ENCODE measurements at regions of chr13 and their contacts with region 1.

Region 1: DNA sequence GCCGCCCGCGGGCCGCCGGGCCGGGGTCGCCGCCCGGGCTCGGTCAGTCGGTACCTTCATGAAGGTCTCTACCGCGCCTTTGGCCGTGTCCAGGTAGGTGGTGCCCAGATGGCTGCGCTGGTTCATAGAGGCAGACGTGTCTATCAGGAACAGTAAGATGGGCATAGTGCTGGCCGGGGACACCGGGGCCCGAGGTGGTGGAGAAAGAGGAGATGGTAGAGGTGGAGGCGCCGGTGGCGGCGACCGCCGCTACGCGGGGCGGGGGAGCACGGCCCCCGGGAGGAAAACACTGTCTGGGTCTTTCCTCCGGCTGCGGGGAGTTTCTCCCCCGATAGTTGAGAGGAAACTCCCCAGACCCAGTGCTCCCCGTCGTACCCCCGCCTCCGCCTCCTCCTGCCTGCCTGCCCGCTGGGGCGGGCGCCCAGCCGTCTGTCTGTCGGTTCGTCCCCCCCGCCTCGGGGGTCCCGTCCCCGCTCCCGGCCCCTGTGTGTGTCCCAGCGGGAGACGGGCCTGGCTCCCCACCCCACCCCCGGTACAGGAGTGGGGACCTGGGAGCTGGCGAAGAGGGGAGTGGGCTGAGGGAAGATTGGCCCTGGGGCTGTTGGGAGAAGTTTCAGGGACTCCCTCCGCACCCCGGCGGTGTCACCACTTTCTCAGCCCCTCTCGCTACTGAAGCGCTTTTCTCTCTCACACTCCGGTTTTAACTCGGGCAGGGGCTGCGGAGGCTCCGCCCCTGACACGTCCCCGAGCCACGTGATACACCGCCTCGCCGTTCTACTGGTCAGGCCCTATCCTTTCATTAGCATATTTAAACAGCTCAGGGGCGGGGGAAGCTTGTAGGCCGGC is at the start of gene INTS6:
- DNase-seq: peak; percentile 99 to 100 (median 99)
- H3K4me3 ChIP-seq: peak within 1 kb of the TSS; percentile 83 to 96 (median 90)
- H3K27ac ChIP-seq: peak within 1 kb of the TSS; percentile 96 to 98
- H3K4me1 ChIP-seq: peaks cover 13 to 42% (median 29%) of the 10 kb centered on the region in 4 experiments
- H3K27me3 ChIP-seq: no peaks in the 10 kb centered on the region

Region 2: GRCh38 chr13:51425410-51426042 is 27.1 kb before region 1 on chr13:
- CTCF ChIA-PET with region 1: no interaction called
- POLR2A ChIA-PET with region 1: no interaction called
- DNase-seq: no peak
- H3K4me3 ChIP-seq: no peak overlapping the region
- H3K27ac ChIP-seq: no peak overlapping the region
- H3K4me1 ChIP-seq: peaks cover 0 to 4% (median 0%) of the 10 kb centered on the region in 4 experiments
- H3K27me3 ChIP-seq: no peaks in the 10 kb centered on the region

Region 3: DNA sequence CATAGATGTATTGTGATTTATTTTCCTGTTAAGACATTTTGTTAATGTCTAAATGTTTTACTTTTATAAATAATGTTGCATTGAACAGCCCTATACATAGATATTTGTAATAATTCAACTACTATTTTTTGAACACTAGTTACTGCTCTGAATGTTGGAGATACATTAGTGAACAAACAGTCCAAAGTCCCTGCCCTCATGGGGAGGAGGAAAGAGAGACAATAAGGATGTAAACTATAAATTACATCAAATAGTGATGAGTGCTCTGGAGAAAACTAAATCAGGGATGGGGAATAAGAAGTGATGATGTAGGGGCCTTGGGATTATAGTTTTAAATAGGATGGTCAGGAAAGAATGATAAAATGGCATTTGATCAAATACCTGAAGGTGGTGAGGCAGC is 12.5 kb after region 1 on chr13:
- CTCF ChIA-PET with region 1: interaction called, 10 read pairs
- POLR2A ChIA-PET with region 1: no interaction called
- DNase-seq: no peak
- H3K4me3 ChIP-seq: no peak overlapping the region
- H3K27ac ChIP-seq: no peak overlapping the region
- H3K4me1 ChIP-seq: no peaks in the 10 kb centered on the region
- H3K27me3 ChIP-seq: no peaks in the 10 kb centered on the region

Region 4: DNA sequence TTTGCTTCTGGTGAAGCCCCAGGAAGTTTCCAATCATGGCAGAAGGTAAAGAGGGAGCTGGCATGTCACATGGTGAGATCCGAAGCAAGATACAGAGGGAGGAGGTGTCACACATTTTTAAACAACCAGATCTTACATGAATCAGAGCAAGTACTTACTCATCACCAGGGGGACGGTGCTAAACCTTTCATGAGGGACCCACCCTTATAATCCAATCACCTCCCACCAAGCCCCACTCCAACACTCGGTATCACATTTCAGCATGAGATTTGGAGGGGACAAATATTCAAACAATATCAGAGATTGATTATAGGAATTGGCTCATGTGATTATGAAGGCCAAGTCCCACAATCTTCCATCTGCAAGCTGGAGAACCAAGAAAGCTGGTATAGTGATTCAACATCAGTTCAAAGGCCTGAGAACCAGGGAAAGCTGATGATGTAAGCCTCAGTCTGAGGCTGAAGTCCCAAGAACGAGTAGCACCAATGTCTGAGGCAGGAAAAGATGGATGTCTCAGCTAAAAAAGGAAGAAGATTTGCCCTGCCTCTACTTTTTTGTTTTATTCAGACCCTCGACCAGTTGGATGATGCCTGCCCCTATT is 73.1 kb after region 1 on chr13:
- CTCF ChIA-PET with region 1: interaction called, 11 read pairs
- POLR2A ChIA-PET with region 1: interaction called, 6 read pairs
- DNase-seq: no peak
- H3K4me3 ChIP-seq: no peak overlapping the region
- H3K27ac ChIP-seq: no peak overlapping the region
- H3K4me1 ChIP-seq: peaks cover 5 to 18% (median 13%) of the 10 kb centered on the region in 4 experiments
- H3K27me3 ChIP-seq: no peaks in the 10 kb centered on the region

Region 5: DNA sequence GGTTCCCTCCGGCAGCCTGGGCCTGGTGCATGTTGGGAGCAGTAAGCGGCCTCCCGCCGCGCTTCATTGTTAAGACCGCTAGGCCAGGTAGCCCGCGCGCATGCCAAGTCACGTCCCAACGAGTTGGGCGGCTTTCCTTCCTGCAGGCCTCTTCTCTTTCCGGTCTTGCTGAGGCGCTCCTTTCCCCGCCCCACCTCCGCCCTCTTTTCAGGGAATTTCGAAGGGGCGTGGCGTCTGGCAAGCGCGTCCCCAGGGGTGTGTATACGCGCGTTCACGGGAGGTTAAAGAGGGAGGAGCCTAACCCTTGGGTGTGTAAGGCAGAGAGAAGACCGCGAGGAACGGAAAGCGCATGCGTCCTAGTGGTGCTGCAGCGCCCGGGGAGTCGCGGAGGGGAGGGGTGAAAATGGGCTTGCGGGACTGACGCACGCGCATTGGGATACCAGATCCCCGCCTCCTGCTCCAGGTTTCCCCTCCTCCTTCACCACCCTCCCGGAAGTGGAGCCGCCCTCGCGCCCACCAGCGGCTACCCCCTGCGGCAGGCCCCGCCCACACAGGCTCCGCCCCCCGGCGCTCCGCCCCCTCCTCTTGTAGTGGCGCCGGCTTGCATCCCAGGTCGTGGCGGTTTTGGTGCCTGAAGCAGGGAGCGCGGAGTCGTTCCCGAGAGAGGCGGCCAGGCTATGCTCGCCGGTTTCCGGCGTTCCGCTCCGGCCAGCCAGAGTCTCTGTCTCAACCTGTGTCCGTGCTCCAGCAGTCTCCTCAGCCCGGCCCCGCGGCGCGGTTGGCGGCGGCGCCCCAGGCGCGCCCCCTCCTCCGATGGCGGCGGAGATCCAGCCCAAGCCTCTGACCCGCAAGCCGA is 131.5 kb after region 1 on chr13 and contains the start of gene WDFY2:
- CTCF ChIA-PET with region 1: interaction called, 4 read pairs
- POLR2A ChIA-PET with region 1: interaction called, 33 read pairs
- DNase-seq: peak; percentile 100
- H3K4me3 ChIP-seq: peak within 1 kb of the TSS; percentile 89 to 100 (median 98)
- H3K27ac ChIP-seq: peak within 1 kb of the TSS; percentile 78 to 86
- H3K4me1 ChIP-seq: peaks cover 17 to 35% (median 25%) of the 10 kb centered on the region in 4 experiments
- H3K27me3 ChIP-seq: no peaks in the 10 kb centered on the region